Panc1 (cell line): ENCODE measurements at regions of chr6 and their contacts with region 1.

Region 1: GRCh38 chr6:85498596-85499258 is 48.8 kb downstream of the NT5E start:
- DNase-seq: no peak
- ATAC-seq: no peak
- H3K4me3 ChIP-seq: no peak overlapping the region
- H3K27ac ChIP-seq: no peak overlapping the region
- H3K4me1 ChIP-seq: no peaks in the 10 kb centered on the region
- H3K27me3 ChIP-seq: no peaks in the 10 kb centered on the region
- CTCF ChIP-seq: no peak

Region 2: DNA sequence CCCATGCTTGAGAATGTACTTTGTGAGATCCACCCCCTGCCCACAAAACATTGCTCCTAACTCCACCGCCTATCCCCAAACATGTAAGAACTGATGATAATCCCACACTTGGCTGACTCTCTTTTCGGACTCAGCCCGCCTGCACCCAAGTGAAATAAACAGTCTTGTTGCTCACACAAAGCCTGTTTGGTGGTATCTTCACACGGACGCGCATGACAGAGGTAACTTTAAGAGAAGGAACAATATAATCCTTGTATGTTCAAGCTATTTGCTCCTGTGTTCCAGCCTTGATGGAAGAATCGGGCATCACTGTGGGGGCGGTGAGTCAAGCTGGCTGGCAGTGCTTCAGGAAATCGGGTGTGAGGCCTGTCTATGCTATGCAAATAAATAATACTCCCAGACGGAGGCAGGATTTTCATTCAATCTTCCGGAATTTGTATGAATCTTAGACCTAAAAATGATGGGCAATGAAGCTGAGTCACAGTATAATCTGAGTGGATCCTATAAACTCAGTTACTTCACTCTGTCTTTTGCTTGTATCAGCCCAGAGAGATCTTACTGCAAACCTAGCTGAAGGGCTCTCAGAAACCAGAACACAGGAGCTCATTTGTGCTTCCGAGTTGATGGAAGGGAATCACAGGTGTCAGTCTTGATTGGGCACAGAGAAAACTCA is 94.1 kb before region 1 on chr6:
- CTCF ChIA-PET with region 1: no interaction called
- POLR2A ChIA-PET with region 1: interaction called, 11 read pairs
- in situ Hi-C with region 1: no loop called
- intact Hi-C with region 1: no loop called
- DNase-seq: peak; percentile 79
- ATAC-seq: peak; percentile 82
- H3K4me3 ChIP-seq: peak overlapping the region in 1 of 2 experiments; percentile 35; a peak in 2 of 4 replicates
- H3K27ac ChIP-seq: peak overlapping the region; percentile 74
- H3K4me1 ChIP-seq: peaks cover 20% of the 10 kb centered on the region
- H3K27me3 ChIP-seq: no peaks in the 10 kb centered on the region
- CTCF ChIP-seq: no peak

Region 3: DNA sequence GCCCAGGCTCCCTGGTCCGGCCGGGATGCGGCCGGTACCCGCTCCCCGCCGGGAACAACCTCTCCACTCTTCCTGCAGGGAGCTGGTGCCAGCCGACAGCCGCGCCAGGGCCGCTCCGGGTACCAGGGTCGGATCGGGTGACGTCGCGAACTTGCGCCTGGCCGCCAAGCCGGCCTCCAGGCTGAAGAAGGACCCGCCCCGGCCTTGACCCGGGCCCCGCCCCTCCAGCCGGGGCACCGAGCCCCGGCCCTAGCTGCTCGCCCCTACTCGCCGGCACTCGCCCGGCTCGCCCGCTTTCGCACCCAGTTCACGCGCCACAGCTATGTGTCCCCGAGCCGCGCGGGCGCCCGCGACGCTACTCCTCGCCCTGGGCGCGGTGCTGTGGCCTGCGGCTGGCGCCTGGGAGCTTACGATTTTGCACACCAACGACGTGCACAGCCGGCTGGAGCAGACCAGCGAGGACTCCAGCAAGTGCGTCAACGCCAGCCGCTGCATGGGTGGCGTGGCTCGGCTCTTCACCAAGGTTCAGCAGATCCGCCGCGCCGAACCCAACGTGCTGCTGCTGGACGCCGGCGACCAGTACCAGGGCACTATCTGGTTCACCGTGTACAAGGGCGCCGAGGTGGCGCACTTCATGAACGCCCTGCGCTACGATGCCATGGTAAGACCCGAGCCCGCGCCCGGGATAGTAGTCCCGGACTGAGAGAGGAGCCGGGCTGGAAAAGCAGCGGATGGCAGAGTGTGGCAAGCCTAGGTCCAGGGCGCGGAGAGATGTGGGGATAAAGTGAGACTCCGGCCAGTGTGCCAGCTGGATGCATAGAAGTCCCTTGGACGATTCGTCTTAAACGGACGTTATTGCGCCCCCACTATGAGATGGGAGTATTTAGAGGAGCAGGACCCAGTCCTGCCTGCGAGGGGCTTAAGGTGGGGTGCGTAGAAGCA is 48.6 kb before region 1 on chr6 and contains the start of gene NT5E:
- CTCF ChIA-PET with region 1: no interaction called
- POLR2A ChIA-PET with region 1: interaction called, 18 read pairs
- in situ Hi-C with region 1: no loop called
- intact Hi-C with region 1: no loop called
- DNase-seq: no peak
- ATAC-seq: peak; percentile 95
- H3K4me3 ChIP-seq: peak within 1 kb of the TSS; percentile 87 to 96
- H3K27ac ChIP-seq: peak within 1 kb of the TSS; percentile 93
- H3K4me1 ChIP-seq: peaks cover 40% of the 10 kb centered on the region
- H3K27me3 ChIP-seq: no peaks in the 10 kb centered on the region
- CTCF ChIP-seq: peak; percentile 39; the same call in 1 of the 2 replicates
- total RNA-seq, gene NT5E: 58.4 TPM

Region 4: DNA sequence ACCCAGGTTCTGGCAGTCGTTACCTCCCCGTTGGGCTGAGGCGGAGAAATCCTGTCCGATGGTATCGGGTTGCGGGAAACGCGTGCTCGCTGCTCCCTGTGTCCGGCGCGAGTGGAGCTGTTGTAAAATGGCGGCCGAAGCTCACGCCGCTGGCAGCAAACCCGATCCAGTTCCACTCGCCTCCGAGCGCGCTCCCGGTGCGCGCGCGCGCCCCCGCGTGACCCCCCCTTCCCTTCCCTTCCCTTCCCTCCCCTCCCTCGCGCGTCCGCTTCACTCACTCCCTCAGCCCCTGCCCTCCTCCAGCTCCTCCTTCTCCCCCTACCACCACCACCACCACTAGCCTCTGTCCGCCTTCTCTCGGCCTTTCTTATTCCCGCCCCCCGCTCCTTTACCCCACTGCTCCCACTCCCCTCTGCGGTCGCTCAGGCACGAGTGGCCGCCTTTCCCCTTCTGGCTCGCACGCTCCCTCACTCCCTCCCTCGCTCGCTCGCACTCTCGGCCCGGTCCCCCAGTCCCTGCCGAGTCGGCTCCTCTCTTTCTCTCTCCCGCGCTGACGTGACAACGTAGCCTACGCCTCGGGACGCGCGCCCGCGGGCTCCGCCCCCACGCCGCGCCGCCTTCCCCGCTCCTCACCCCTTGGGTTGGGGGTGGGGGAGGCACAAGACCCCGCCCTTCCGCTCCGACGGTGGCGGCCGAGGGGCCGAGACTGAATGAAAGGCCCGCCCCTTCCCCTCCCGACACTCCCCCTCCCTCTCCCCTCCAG is 144.2 kb after region 1 on chr6 and contains the start of gene SYNCRIP:
- CTCF ChIA-PET with region 1: no interaction called
- POLR2A ChIA-PET with region 1: no interaction called
- in situ Hi-C with region 1: no loop called
- intact Hi-C with region 1: no loop called
- DNase-seq: peak; percentile 81
- ATAC-seq: peak; percentile 91
- H3K4me3 ChIP-seq: peak within 1 kb of the TSS; percentile 79 to 91
- H3K27ac ChIP-seq: peak within 1 kb of the TSS; percentile 99
- H3K4me1 ChIP-seq: peaks cover 21% of the 10 kb centered on the region; the same call in 1 of the 2 replicates
- H3K27me3 ChIP-seq: no peaks in the 10 kb centered on the region
- CTCF ChIP-seq: no peak
- total RNA-seq, gene SYNCRIP: 141 TPM